WTC11 (cell line): ENCODE measurements at regions of chr1 and their contacts with region 1.

Region 1: DNA sequence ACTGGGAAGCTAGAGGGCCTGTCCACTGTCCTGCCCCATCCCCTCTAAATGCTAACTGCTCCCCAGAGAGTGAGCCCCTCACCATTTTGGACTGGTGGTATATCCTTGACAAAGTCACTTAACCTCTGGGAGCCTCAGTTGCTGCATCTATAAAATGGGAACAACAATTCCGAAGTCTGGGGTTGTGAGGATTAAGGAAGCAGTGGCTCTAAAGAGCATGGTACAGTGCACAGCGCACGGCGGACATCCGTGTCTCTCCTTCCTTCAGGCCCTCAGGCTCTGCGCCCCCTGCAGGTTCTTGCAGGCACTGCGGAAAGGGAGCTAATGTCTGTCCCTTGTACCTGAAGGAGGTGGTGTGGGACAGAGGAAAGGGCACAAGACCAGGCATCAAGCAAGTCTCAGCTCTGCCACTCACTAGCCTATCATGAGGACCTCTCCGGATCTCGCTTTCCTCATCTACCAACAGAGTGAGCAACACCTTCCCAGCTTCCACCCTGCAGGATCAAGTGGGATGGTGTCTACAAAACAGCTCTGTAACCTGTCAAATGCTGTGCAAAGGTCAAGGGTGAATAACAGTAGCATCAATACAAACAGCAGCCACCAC is 20.1 kb downstream of the ECE1 start:
- DNase-seq: peak; percentile 96
- ATAC-seq: peak; percentile 96
- H3K4me3 Mint-ChIP-seq: no peak overlapping the region
- H3K27ac Mint-ChIP-seq: no peak overlapping the region
- H3K4me1 Mint-ChIP-seq: peaks cover 2% of the 10 kb centered on the region; the same call in 1 of the 2 replicates
- H3K27me3 Mint-ChIP-seq: no peaks in the 10 kb centered on the region
- CTCF ChIP-seq: peak; percentile 96

Region 2: GRCh38 chr1:21184276-21184675 is 85.9 kb before region 1 on chr1:
- CTCF ChIA-PET with region 1: no interaction called
- POLR2A ChIA-PET with region 1: no interaction called
- DNase-seq: no peak
- ATAC-seq: no peak
- H3K4me3 Mint-ChIP-seq: no peak overlapping the region
- H3K27ac Mint-ChIP-seq: no peak overlapping the region
- H3K4me1 Mint-ChIP-seq: no peaks in the 10 kb centered on the region
- H3K27me3 Mint-ChIP-seq: peaks cover 86% of the 10 kb centered on the region
- CTCF ChIP-seq: no peak

Region 3: GRCh38 chr1:21232044-21232443 is 38.1 kb before region 1 on chr1:
- CTCF ChIA-PET with region 1: interaction called, 30 read pairs
- POLR2A ChIA-PET with region 1: no interaction called
- DNase-seq: peak; percentile 37
- ATAC-seq: peak; percentile 66
- H3K4me3 Mint-ChIP-seq: no peak overlapping the region
- H3K27ac Mint-ChIP-seq: no peak overlapping the region
- H3K4me1 Mint-ChIP-seq: peaks cover 6% of the 10 kb centered on the region; the same call in 1 of the 2 replicates
- H3K27me3 Mint-ChIP-seq: no peaks in the 10 kb centered on the region
- CTCF ChIP-seq: peak; percentile 65

Region 4: DNA sequence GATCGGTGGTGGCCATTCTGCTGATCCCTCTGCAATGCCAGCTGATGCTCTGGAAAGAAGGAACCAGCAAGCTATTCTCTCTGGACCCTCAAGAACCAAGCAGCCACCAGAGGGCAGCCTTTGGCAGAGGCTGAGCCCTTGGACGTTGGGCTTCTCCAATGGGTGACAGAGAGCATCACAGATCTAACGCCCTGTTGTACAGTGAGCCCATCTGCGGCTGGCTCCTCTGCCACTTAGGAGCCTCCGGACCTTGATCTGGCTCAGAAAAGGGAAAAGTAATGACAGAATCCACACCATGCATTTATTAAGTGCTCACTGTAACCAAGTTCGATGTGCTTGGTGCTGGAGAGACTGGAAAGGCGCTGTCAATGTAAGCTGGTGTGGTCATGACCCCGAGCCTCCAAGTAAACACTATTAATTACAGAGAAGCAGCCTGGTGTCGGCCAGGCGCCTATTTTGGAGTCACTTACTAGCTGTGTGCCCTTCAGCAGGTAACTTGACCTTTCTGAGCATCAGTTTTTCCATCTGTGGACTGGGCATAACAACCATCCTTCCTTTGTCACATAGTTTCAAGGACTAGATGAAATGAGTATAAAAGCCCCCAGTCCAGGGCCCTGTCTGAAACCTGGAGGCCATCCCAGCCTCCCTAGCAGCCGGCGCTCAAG is 14.8 kb before region 1 on chr1:
- CTCF ChIA-PET with region 1: interaction called, 220 read pairs
- POLR2A ChIA-PET with region 1: no interaction called
- DNase-seq: peak; percentile 95
- ATAC-seq: peak; percentile 98
- H3K4me3 Mint-ChIP-seq: no peak overlapping the region
- H3K27ac Mint-ChIP-seq: no peak overlapping the region
- H3K4me1 Mint-ChIP-seq: no peaks in the 10 kb centered on the region
- H3K27me3 Mint-ChIP-seq: no peaks in the 10 kb centered on the region
- CTCF ChIP-seq: peak; percentile 79

Region 5: GRCh38 chr1:21308847-21309652 is 38.9 kb after region 1 on chr1:
- CTCF ChIA-PET with region 1: interaction called, 52 read pairs
- POLR2A ChIA-PET with region 1: no interaction called
- DNase-seq: no peak
- ATAC-seq: no peak
- H3K4me3 Mint-ChIP-seq: no peak overlapping the region
- H3K27ac Mint-ChIP-seq: peak overlapping the region; percentile 60
- H3K4me1 Mint-ChIP-seq: peaks cover 67% of the 10 kb centered on the region
- H3K27me3 Mint-ChIP-seq: no peaks in the 10 kb centered on the region
- CTCF ChIP-seq: no peak

Region 6: DNA sequence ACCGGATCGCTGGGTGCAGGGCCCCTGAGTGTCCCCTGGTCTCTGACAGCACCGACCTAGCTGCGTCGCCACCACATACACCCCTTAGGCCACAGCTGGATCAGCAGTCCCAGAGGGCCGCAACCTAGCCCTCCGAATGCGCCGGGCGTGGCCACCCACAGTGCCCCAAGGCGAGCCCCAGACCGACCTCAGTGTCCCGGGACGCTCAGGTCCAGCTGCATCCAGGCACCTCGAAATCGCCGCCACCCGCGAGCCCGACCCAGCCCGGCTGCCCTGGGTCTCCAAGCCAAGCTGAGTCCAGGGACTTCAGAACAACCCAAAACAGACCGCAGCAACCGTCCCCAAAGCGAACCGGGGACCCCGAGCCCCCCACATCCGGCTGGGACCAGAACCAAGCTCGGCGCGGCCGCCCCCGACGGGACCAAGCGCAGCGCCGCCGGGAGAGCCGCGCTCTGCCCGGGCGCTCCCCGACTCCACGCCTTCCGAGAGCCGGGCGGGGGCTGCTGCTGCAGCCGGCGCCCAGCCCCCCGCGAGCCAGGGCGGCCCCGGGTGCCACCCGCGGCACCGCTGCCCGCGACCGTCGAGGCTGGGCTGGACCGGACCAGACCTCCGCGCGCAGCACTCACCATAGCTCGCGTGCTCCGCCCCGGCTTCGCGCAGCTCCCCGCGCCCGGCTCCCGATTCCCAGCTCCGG is 74.7 kb after region 1 on chr1:
- CTCF ChIA-PET with region 1: interaction called, 44 read pairs
- POLR2A ChIA-PET with region 1: no interaction called
- DNase-seq: peak; percentile 40
- ATAC-seq: peak; percentile 17
- H3K4me3 Mint-ChIP-seq: peak overlapping the region; percentile 79
- H3K27ac Mint-ChIP-seq: no peak overlapping the region
- H3K4me1 Mint-ChIP-seq: peaks cover 19% of the 10 kb centered on the region
- H3K27me3 Mint-ChIP-seq: peaks cover 22% of the 10 kb centered on the region
- CTCF ChIP-seq: no peak

Region 7: GRCh38 chr1:21362096-21362495 is 91.9 kb after region 1 on chr1:
- CTCF ChIA-PET with region 1: interaction called, 33 read pairs
- POLR2A ChIA-PET with region 1: no interaction called
- DNase-seq: no peak
- ATAC-seq: no peak
- H3K4me3 Mint-ChIP-seq: no peak overlapping the region
- H3K27ac Mint-ChIP-seq: no peak overlapping the region
- H3K4me1 Mint-ChIP-seq: no peaks in the 10 kb centered on the region
- H3K27me3 Mint-ChIP-seq: no peaks in the 10 kb centered on the region; the same call in 1 of the 2 replicates
- CTCF ChIP-seq: no peak